ENCODE measurements at regions of chr1 and their contacts with region 1.

Region 1: GRCh38 chr1:202998836-202999750 is 8.1 kb upstream of the TMEM183A start:
- DNase-seq: peak; percentile 29 to 83 (median 58)
- ATAC-seq: peak; percentile 59
- H3K4me3 ChIP-seq: no peak overlapping the region
- H3K4me3 Mint-ChIP-seq: no peak overlapping the region
- H3K27ac ChIP-seq: no peak overlapping the region
- H3K27ac Mint-ChIP-seq: no peak overlapping the region
- H3K4me1 ChIP-seq: peaks cover 4% of the 10 kb centered on the region
- H3K4me1 Mint-ChIP-seq: peaks cover 7% of the 10 kb centered on the region
- H3K27me3 ChIP-seq: peaks cover 0 to 14% of the 10 kb centered on the region in 2 experiments
- H3K27me3 Mint-ChIP-seq: peaks cover 33% of the 10 kb centered on the region
- CTCF ChIP-seq: peak; percentile 91

Region 2: GRCh38 chr1:202750758-202751157 is 248.3 kb before region 1 on chr1:
- CTCF ChIA-PET with region 1: no interaction called
- POLR2A ChIA-PET with region 1: no interaction called
- intact Hi-C with region 1: loop called (anchors 1 to 2 kb)
- DNase-seq: peak in 2 of 14 experiments; percentile 12 to 17
- ATAC-seq: no peak
- H3K4me3 ChIP-seq: no peak overlapping the region
- H3K4me3 Mint-ChIP-seq: no peak overlapping the region
- H3K27ac ChIP-seq: no peak overlapping the region
- H3K27ac Mint-ChIP-seq: no peak overlapping the region
- H3K4me1 ChIP-seq: no peaks in the 10 kb centered on the region
- H3K4me1 Mint-ChIP-seq: no peaks in the 10 kb centered on the region
- H3K27me3 ChIP-seq: no peaks in the 10 kb centered on the region
- H3K27me3 Mint-ChIP-seq: no peaks in the 10 kb centered on the region
- CTCF ChIP-seq: peak; percentile 18

Region 3: GRCh38 chr1:202810615-202811295 is 188.3 kb before region 1 on chr1 and contains the start of gene PCAT6:
- CTCF ChIA-PET with region 1: no interaction called
- POLR2A ChIA-PET with region 1: no interaction called
- intact Hi-C with region 1: loop called in 1 of 2 experiments (anchors 5 kb)
- DNase-seq: peak; percentile 67 to 93 (median 81)
- ATAC-seq: peak; percentile 67
- H3K4me3 ChIP-seq: peak within 1 kb of the TSS; percentile 96
- H3K4me3 Mint-ChIP-seq: peak within 1 kb of the TSS; percentile 90
- H3K27ac ChIP-seq: peak within 1 kb of the TSS in 1 of 2 donors; percentile 35
- H3K27ac Mint-ChIP-seq: peak within 1 kb of the TSS; percentile 80
- H3K4me1 ChIP-seq: peaks cover 33% of the 10 kb centered on the region
- H3K4me1 Mint-ChIP-seq: peaks cover 38% of the 10 kb centered on the region
- H3K27me3 ChIP-seq: no peaks in the 10 kb centered on the region
- H3K27me3 Mint-ChIP-seq: no peaks in the 10 kb centered on the region
- CTCF ChIP-seq: no peak
- total RNA-seq, gene PCAT6: 0.91 to 1.3 TPM

Region 4: DNA sequence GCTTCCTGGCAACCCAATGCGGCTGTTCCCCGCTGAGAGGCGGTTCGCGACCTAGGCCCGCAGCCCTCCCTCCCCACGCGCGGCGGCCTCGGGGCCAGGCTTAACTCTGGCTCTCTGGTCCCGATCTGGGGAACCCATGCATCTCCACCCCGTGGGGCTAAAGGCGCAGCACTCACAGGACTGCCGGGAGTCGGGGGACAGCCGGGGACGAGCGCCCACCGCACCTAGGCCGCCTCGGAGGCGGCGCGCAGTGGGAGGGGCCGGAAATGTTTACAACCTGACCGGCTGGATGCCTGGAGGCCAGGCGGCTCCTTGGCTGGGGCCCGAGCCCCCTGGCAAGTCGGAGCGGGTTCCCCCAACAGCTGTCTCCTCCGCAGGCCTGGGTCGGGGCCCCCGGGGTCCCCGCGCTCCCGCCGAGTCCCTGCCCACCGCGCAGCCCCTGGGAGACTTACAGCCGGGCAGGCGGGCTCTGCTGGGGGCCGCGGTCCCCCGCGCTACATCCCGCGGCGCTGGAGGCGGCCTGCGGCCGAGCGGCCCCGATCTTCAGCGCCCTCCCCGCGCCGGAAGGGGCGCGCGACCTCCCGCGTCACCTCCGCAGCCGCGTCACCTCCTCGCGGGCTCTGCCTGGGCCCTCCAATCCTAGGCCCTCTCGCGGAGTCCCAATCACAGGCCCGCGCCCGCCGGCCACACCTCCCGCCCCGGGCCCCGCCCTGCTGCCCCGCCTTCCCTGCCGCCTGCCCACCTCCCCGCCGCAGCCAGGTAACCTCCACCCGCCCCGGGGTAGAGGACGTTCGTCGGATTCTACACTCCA is 41.2 kb before region 1 on chr1 and contains the start of gene ADIPOR1:
- CTCF ChIA-PET with region 1: interaction called, 5 read pairs
- POLR2A ChIA-PET with region 1: no interaction called
- intact Hi-C with region 1: loop called in 1 of 2 experiments (anchors 5 kb)
- DNase-seq: peak; percentile 88 to 97 (median 95)
- ATAC-seq: peak; percentile 96
- H3K4me3 ChIP-seq: peak within 1 kb of the TSS; percentile 98
- H3K4me3 Mint-ChIP-seq: peak within 1 kb of the TSS; percentile 98
- H3K27ac ChIP-seq: peak within 1 kb of the TSS; percentile 81
- H3K27ac Mint-ChIP-seq: peak within 1 kb of the TSS; percentile 95
- H3K4me1 ChIP-seq: peaks cover 38% of the 10 kb centered on the region
- H3K4me1 Mint-ChIP-seq: peaks cover 55% of the 10 kb centered on the region
- H3K27me3 ChIP-seq: no peaks in the 10 kb centered on the region
- H3K27me3 Mint-ChIP-seq: no peaks in the 10 kb centered on the region
- CTCF ChIP-seq: peak; percentile 22
- total RNA-seq, gene ADIPOR1: 91.5 to 95.6 TPM

Measured in CD4-positive, alpha-beta T cell (primary cell).